ENCODE measurements at regions of chr4 and their contacts with region 1.

Region 1: GRCh38 chr4:38179690-38180377 is 219.6 kb downstream of the PTTG2 start:
- DNase-seq: peak; percentile 58 to 86 (median 76)
- ATAC-seq: peak; percentile 65
- H3K4me3 ChIP-seq: no peak overlapping the region
- H3K4me3 Mint-ChIP-seq: no peak overlapping the region
- H3K27ac ChIP-seq: no peak overlapping the region
- H3K27ac Mint-ChIP-seq: no peak overlapping the region
- H3K4me1 ChIP-seq: peaks cover 19% of the 10 kb centered on the region
- H3K4me1 Mint-ChIP-seq: peaks cover 37% of the 10 kb centered on the region
- H3K27me3 ChIP-seq: no peaks in the 10 kb centered on the region
- H3K27me3 Mint-ChIP-seq: no peaks in the 10 kb centered on the region
- CTCF ChIP-seq: peak; percentile 97

Region 2: GRCh38 chr4:37628977-37629609 is 550.7 kb before region 1 on chr4:
- CTCF ChIA-PET with region 1: no interaction called
- POLR2A ChIA-PET with region 1: no interaction called
- intact Hi-C with region 1: no loop called
- DNase-seq: no peak
- ATAC-seq: no peak
- H3K4me3 ChIP-seq: no peak overlapping the region
- H3K4me3 Mint-ChIP-seq: no peak overlapping the region
- H3K27ac ChIP-seq: no peak overlapping the region
- H3K27ac Mint-ChIP-seq: no peak overlapping the region
- H3K4me1 ChIP-seq: no peaks in the 10 kb centered on the region
- H3K4me1 Mint-ChIP-seq: no peaks in the 10 kb centered on the region
- H3K27me3 ChIP-seq: no peaks in the 10 kb centered on the region
- H3K27me3 Mint-ChIP-seq: no peaks in the 10 kb centered on the region
- CTCF ChIP-seq: no peak

Region 3: DNA sequence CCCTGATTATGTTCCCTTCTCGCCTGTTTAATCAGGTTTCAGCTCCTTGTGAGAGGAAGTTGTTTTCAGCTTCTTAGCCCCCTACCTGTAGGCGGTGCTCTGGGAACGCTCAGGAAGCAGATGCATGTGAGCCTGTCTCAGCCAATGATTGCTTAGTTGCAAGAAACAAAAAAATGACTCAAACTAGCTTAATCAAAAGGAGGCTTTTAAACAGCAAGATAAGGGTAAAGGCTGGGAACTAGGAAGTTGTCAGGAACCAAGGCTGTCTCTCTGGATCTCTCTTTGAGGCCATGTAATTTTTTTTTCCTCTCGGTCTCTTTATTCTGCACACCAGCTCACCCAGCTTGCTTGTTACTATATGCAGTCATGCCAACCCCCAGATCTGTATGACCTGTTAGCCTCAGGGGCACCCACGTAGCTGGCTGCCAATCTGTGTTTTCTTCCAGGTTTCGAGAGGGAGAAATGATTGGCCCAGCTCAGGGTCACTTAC is 110.5 kb before region 1 on chr4:
- CTCF ChIA-PET with region 1: interaction called, 15 read pairs
- POLR2A ChIA-PET with region 1: no interaction called
- intact Hi-C with region 1: no loop called
- DNase-seq: peak in 1 of 9 experiments; percentile 67
- ATAC-seq: no peak
- H3K4me3 ChIP-seq: no peak overlapping the region
- H3K4me3 Mint-ChIP-seq: no peak overlapping the region
- H3K27ac ChIP-seq: no peak overlapping the region
- H3K27ac Mint-ChIP-seq: no peak overlapping the region
- H3K4me1 ChIP-seq: no peaks in the 10 kb centered on the region
- H3K4me1 Mint-ChIP-seq: peaks cover 11% of the 10 kb centered on the region
- H3K27me3 ChIP-seq: no peaks in the 10 kb centered on the region
- H3K27me3 Mint-ChIP-seq: no peaks in the 10 kb centered on the region
- CTCF ChIP-seq: no peak

Region 4: DNA sequence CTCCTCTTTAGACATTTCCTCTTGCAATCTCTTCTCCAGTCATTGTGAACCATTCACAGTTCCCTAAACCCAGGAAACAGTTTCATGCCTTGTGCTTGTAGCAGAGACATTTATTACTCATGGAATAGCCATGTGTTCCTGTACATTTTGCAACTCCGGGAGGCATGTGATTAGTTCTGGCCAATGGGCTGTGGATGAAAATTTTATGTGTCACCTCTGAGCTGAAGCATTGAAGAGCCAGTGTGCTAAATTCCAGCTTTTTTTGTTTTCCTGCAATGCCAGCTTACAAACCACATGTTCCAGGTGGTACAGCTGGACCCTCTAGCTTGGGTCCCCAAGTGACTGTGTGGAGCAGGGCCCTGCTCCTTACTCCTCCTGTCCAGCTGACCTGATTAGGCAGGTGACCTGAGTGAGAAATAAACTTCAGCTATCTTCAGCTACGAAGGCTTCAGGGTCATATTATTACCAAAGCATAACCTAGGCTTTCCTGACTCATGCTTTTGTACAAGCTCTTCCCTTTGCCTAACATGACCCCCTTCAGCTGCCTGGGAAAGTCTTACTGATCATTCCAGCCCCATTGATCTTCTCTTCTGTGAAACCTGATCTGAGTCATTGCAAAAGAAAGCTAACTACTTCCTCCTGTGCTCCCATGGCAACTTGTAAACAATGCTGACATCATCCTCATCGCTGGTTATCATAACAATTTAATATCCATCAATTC is 19.2 kb before region 1 on chr4:
- CTCF ChIA-PET with region 1: interaction called, 14 read pairs
- POLR2A ChIA-PET with region 1: no interaction called
- intact Hi-C with region 1: loop called in 1 of 2 experiments (anchors 2 kb)
- DNase-seq: peak in 4 of 9 experiments; percentile 32 to 76 (median 50)
- ATAC-seq: peak; percentile 83
- H3K4me3 ChIP-seq: no peak overlapping the region
- H3K4me3 Mint-ChIP-seq: no peak overlapping the region
- H3K27ac ChIP-seq: no peak overlapping the region
- H3K27ac Mint-ChIP-seq: no peak overlapping the region
- H3K4me1 ChIP-seq: peaks cover 2% of the 10 kb centered on the region
- H3K4me1 Mint-ChIP-seq: peaks cover 9% of the 10 kb centered on the region
- H3K27me3 ChIP-seq: no peaks in the 10 kb centered on the region
- H3K27me3 Mint-ChIP-seq: no peaks in the 10 kb centered on the region
- CTCF ChIP-seq: no peak

Region 5: DNA sequence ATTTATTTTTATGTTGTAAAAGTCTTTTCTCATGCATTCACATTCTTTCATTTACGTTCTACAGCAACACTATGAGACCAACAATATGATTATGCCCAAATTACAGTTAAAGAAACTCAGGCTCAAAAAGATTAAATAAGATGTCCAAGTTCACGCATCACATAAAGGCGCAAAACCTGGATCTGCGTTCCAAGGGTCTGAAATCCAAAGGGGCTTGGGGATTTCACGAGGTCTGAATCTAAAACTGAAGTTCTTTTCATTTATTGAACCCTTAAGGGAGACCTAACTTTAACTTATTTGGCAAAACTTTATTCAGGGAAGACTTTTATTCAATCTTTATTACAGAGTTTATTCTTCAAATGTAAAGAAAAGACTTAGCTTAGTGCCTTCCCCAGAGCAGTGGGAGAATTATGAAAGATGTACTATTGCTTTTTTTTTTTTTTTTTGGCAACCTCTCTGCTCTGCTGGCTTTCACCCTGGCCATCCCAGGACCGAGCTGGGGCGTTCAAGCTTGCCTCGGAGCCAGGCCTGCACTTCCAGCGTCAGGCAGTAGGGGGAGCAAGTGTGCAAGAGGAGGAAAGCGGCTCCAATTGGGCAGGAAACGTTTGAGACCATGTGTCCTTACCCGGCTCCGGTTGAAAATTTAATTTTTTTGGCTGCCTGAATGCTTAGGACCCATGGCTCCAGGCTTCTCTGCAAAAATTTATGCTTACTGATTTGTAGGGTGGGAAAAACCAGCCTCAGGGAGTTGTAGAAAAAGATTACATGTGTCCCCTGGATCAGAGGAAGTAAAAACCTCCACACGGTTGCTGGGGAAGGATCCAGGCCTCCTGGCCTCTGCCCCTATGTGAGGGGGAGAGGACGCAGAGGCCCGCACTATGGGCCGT is 139.9 kb after region 1 on chr4:
- CTCF ChIA-PET with region 1: interaction called, 33 read pairs
- POLR2A ChIA-PET with region 1: no interaction called
- intact Hi-C with region 1: loop called (anchors 1 to 2 kb)
- DNase-seq: peak; percentile 83 to 98 (median 90)
- ATAC-seq: peak; percentile 88
- H3K4me3 ChIP-seq: peak overlapping the region; percentile 43 to 51
- H3K4me3 Mint-ChIP-seq: peak overlapping the region; percentile 82
- H3K27ac ChIP-seq: peak overlapping the region; percentile 33 to 78
- H3K27ac Mint-ChIP-seq: peak overlapping the region; percentile 90
- H3K4me1 ChIP-seq: peaks cover 39% of the 10 kb centered on the region
- H3K4me1 Mint-ChIP-seq: peaks cover 62% of the 10 kb centered on the region
- H3K27me3 ChIP-seq: no peaks in the 10 kb centered on the region
- H3K27me3 Mint-ChIP-seq: no peaks in the 10 kb centered on the region
- CTCF ChIP-seq: peak; percentile 96

Region 6: DNA sequence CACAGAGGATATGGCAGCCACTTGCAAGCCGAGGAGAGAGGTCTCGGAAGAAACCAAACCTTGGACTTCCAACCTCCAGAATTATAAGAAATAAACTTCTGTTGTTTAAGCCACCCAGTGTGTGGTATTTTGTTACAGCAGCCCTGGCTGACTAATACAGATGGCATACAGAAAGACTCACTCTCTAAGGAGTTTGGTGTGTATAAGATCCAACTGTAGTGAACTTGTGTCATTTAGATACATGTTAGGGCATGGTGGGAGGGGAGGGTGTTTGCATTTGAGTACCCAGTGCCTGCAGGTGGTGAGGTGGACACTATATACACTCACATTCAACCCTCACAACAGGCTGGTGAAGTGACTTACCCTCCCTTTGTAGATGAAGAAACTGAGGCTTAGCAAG is 251.0 kb after region 1 on chr4:
- CTCF ChIA-PET with region 1: no interaction called
- POLR2A ChIA-PET with region 1: no interaction called
- intact Hi-C with region 1: no loop called
- DNase-seq: no peak
- ATAC-seq: no peak
- H3K4me3 ChIP-seq: no peak overlapping the region
- H3K4me3 Mint-ChIP-seq: no peak overlapping the region
- H3K27ac ChIP-seq: no peak overlapping the region
- H3K27ac Mint-ChIP-seq: no peak overlapping the region
- H3K4me1 ChIP-seq: no peaks in the 10 kb centered on the region
- H3K4me1 Mint-ChIP-seq: no peaks in the 10 kb centered on the region
- H3K27me3 ChIP-seq: no peaks in the 10 kb centered on the region
- H3K27me3 Mint-ChIP-seq: no peaks in the 10 kb centered on the region
- CTCF ChIP-seq: no peak

Region 7: GRCh38 chr4:38687571-38688011 is 507.8 kb after region 1 on chr4:
- CTCF ChIA-PET with region 1: interaction called, 11 read pairs
- POLR2A ChIA-PET with region 1: no interaction called
- intact Hi-C with region 1: no loop called
- DNase-seq: peak in 1 of 9 experiments; percentile 33
- ATAC-seq: no peak
- H3K4me3 ChIP-seq: no peak overlapping the region
- H3K4me3 Mint-ChIP-seq: no peak overlapping the region
- H3K27ac ChIP-seq: peak overlapping the region in 1 of 2 experiments; percentile 16
- H3K27ac Mint-ChIP-seq: peak overlapping the region; percentile 12
- H3K4me1 ChIP-seq: peaks cover 48% of the 10 kb centered on the region
- H3K4me1 Mint-ChIP-seq: peaks cover 71% of the 10 kb centered on the region
- H3K27me3 ChIP-seq: no peaks in the 10 kb centered on the region
- H3K27me3 Mint-ChIP-seq: no peaks in the 10 kb centered on the region
- CTCF ChIP-seq: no peak

Region 8: DNA sequence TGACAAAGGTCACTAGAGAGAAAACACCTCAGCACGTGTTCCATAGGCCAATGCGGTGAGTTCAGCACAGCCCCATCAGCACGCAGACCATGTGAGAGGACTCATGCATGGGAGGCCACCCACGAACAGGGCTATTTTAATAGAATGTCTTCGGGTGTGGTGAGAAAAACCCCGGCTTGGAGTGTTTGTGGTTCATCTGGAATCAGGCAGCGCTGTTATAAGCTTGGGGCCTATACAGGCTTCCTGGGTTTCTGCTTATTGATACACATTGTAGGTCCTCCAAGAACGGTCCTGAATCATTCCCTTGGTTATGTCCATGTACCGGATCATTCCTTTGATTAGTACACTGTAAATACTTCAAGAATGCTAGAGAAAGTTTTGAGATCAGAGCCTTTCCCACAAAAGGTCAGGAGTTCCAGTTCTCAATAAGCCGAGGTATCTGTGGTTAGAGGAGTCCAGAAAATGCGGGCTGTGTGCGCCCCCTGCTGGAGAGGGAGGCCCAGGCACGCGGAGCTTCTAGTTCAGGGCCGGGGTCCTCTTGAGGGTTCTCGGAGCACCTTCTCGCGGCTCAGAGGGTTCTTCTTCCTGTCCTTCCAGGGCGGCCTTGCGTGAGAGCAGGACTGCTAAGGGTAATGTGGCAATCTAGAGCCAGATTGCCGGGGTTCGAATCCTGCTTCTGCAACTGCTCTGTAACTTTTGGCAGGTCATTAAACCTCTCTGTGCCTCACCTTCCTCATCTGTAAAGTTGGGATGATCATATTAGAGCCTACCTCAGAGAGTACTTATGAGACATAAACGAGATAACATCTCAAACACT is 551.2 kb after region 1 on chr4:
- CTCF ChIA-PET with region 1: interaction called, 264 read pairs
- POLR2A ChIA-PET with region 1: interaction called, 6 read pairs
- intact Hi-C with region 1: loop called (anchors 1 kb)
- DNase-seq: peak; percentile 60 to 90 (median 81)
- ATAC-seq: peak; percentile 75
- H3K4me3 ChIP-seq: no peak overlapping the region
- H3K4me3 Mint-ChIP-seq: no peak overlapping the region
- H3K27ac ChIP-seq: no peak overlapping the region
- H3K27ac Mint-ChIP-seq: no peak overlapping the region
- H3K4me1 ChIP-seq: peaks cover 7% of the 10 kb centered on the region
- H3K4me1 Mint-ChIP-seq: peaks cover 11% of the 10 kb centered on the region
- H3K27me3 ChIP-seq: no peaks in the 10 kb centered on the region
- H3K27me3 Mint-ChIP-seq: no peaks in the 10 kb centered on the region
- CTCF ChIP-seq: peak; percentile 91

Region 9: GRCh38 chr4:38782452-38783108 is 602.7 kb after region 1 on chr4 and contains the start of gene TLR10:
- CTCF ChIA-PET with region 1: interaction called, 13 read pairs
- POLR2A ChIA-PET with region 1: no interaction called
- intact Hi-C with region 1: loop called (anchors 1 kb)
- DNase-seq: peak in 6 of 9 experiments; percentile 35 to 71 (median 48)
- ATAC-seq: peak; percentile 82
- H3K4me3 ChIP-seq: no peak within 1 kb of the TSS
- H3K4me3 Mint-ChIP-seq: peak within 1 kb of the TSS; percentile 13
- H3K27ac ChIP-seq: no peak within 1 kb of the TSS
- H3K27ac Mint-ChIP-seq: no peak within 1 kb of the TSS
- H3K4me1 ChIP-seq: no peaks in the 10 kb centered on the region
- H3K4me1 Mint-ChIP-seq: peaks cover 4% of the 10 kb centered on the region
- H3K27me3 ChIP-seq: no peaks in the 10 kb centered on the region
- H3K27me3 Mint-ChIP-seq: no peaks in the 10 kb centered on the region
- CTCF ChIP-seq: peak; percentile 86
- total RNA-seq, gene TLR10: 0.22 to 0.28 TPM

Measured in CD8-positive, alpha-beta T cell (primary cell).